A673 (cell line): ENCODE measurements at regions of chr12 and their contacts with region 1.

Region 1: GRCh38 chr12:27619308-27619707 is 76.9 kb upstream of the REP15 start:
- DNase-seq: peak; percentile 87
- H3K4me3 ChIP-seq: no peak overlapping the region
- H3K27ac ChIP-seq: peak overlapping the region; percentile 17
- H3K4me1 ChIP-seq: peaks cover 65% of the 10 kb centered on the region
- H3K27me3 ChIP-seq: no peaks in the 10 kb centered on the region
- CTCF ChIP-seq: no peak

Region 2: DNA sequence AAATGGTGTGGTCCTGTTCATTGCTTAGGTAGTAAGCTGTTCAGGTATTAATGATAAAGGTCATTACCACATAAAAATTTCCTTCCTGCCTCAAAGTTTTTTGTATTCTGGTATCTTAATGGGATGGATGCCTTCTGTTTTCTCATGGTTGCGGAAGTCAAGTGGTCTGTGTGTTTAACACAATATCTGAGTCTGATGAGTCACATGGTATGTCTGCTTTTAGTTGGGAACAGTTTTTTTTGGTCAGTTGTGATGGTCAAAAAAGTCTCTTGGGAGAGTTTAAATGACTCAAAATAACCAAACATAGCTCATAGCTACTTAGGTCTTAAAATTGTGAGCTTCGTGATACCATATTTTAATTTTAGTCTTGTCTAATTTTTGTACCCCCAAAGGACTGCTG is 334.6 kb before region 1 on chr12:
- CTCF ChIA-PET with region 1: no interaction called
- POLR2A ChIA-PET with region 1: no interaction called
- intact Hi-C with region 1: no loop called
- DNase-seq: no peak
- H3K4me3 ChIP-seq: no peak overlapping the region
- H3K27ac ChIP-seq: no peak overlapping the region
- H3K4me1 ChIP-seq: no peaks in the 10 kb centered on the region
- H3K27me3 ChIP-seq: no peaks in the 10 kb centered on the region
- CTCF ChIP-seq: no peak

Region 3: DNA sequence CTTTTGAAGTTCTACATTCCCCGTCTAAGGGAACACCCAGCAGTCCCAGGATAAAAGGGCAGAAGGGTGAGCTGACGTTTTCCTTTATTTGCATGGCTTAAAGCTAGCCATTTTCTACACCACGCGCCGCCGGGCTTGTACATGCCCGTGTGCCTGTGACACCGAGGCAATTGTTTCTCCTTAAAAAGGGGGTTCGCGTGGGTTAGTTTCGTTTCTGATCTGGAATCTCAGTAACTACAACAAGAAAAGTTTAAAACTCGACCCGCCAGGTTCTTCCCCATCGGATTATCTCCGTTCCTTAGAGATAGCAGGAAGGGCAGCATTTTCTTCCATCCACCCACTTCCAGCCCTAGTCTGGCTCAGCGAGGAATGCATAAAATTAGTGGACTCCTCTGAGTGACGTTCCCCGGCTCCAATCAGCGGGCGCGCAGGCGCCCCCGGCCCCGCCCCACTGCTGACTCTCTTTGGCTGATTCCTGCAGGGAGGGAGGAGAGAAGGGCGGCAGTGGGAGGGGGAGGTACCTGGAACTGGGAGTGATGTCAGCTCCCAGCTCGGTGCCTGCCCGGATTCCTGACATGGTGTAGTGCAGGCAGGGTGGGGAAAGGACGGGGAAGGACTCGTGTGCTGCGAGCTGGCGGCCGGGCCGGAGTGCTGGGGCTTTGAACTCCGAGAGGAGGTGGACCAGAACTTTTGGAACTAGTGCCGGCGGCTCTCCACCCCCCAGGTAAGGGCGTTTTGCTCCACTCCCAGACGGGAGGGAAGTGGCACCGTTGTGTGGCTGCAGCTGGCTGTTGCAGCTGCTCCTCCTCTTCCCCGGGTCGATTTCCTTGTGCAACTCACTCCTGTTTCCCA is 95.4 kb before region 1 on chr12 and contains the start of gene PPFIBP1:
- CTCF ChIA-PET with region 1: no interaction called
- POLR2A ChIA-PET with region 1: no interaction called
- intact Hi-C with region 1: loop called (anchors 5 kb)
- DNase-seq: peak; percentile 99
- H3K4me3 ChIP-seq: peak within 1 kb of the TSS; percentile 69
- H3K27ac ChIP-seq: peak within 1 kb of the TSS; percentile 72
- H3K4me1 ChIP-seq: peaks cover 34% of the 10 kb centered on the region
- H3K27me3 ChIP-seq: no peaks in the 10 kb centered on the region
- CTCF ChIP-seq: 0 out of 2 replicates have a peak, but pooled peaks have one; percentile 17
- total RNA-seq, gene PPFIBP1: 41.2 and 49.1 TPM in 2 replicates